Activated CD8-positive, alpha-beta T cell treated with anti-CD3 and anti-CD28 coated beads, Interleukin-2, amount 10 ng/mL, durations not matched to agents 7 days and 5 days (primary cell): ENCODE measurements at regions of chr1 and their contacts with region 1.

Region 1: DNA sequence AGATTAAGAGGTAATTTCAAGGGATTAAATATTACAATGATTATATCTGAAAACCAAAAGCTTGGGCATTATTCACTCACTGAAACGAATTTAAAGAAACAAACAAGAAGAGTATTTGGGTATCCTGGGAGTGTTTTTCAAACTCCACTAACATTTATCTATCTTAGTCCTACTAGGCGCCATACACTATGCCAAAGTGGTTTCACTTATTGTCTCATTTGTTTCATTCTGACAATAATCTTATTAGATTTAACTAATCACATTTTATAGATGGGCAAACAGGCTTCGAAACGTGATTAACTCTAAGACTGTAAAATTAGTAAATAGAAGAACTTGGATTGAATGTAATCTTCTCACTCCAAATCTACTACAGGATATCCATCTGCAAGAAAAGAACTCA is 25.4 kb downstream of the ASH1L start:
- DNase-seq: no peak
- ATAC-seq: no peak
- H3K4me3 Mint-ChIP-seq: no peak overlapping the region
- H3K27ac Mint-ChIP-seq: peak overlapping the region; percentile 91
- H3K4me1 Mint-ChIP-seq: peaks cover 57% of the 10 kb centered on the region
- H3K27me3 Mint-ChIP-seq: no peaks in the 10 kb centered on the region

Region 2: GRCh38 chr1:155562581-155563376 is 25.6 kb after region 1 on chr1 and contains the start of gene ASH1L:
- CTCF ChIA-PET with region 1: no interaction called
- POLR2A ChIA-PET with region 1: interaction called, 18 read pairs
- DNase-seq: peak; percentile 93
- ATAC-seq: peak; percentile 82
- H3K4me3 Mint-ChIP-seq: peak within 1 kb of the TSS; percentile 99
- H3K27ac Mint-ChIP-seq: peak within 1 kb of the TSS; percentile 99
- H3K4me1 Mint-ChIP-seq: peaks cover 49% of the 10 kb centered on the region
- H3K27me3 Mint-ChIP-seq: no peaks in the 10 kb centered on the region
- total RNA-seq, gene ASH1L: 37.7 to 41.1 TPM